ENCODE measurements at regions of chr1 and their contacts with region 1.

Region 1: GRCh38 chr1:172398970-172399755 is 21.3 kb upstream of the C1orf105 start:
- DNase-seq: peak; percentile 100
- ATAC-seq: peak; percentile 91
- H3K4me3 ChIP-seq: peak overlapping the region; percentile 1; the same call in 1 of the 2 replicates
- H3K27ac ChIP-seq: peak overlapping the region; percentile 59
- H3K4me1 ChIP-seq: peaks cover 49% of the 10 kb centered on the region
- H3K27me3 ChIP-seq: no peaks in the 10 kb centered on the region
- CTCF ChIP-seq: peak; percentile 99

Region 2: DNA sequence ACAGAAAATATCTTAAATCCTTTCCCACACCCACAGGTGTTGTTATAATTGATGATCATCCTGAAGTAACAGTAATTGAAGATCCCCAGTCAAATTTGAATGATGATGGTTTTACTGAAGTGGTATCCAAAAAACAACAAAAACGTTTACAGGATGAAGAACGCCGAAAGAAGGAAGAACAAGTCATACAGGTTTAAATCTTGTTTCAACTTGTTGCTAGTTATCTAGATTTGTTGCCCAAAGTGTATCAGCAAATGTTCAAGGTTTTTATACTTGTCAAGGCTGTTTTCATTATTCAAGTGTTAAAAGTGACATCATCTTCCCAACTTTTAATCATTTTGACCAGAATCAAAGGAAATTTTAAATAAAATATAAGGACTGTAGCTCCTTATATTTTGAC is 849.1 kb before region 1 on chr1:
- CTCF ChIA-PET with region 1: no interaction called
- POLR2A ChIA-PET with region 1: no interaction called
- intact Hi-C with region 1: loop called (anchors 10 kb)
- DNase-seq: no peak
- ATAC-seq: no peak
- H3K4me3 ChIP-seq: no peak overlapping the region
- H3K27ac ChIP-seq: no peak overlapping the region
- H3K4me1 ChIP-seq: no peaks in the 10 kb centered on the region
- H3K27me3 ChIP-seq: no peaks in the 10 kb centered on the region
- CTCF ChIP-seq: no peak

Region 3: GRCh38 chr1:172041742-172042141 is 357.4 kb before region 1 on chr1:
- CTCF ChIA-PET with region 1: interaction called, 8 read pairs
- POLR2A ChIA-PET with region 1: interaction called, 17 read pairs
- intact Hi-C with region 1: loop called (anchors 1 kb)
- DNase-seq: peak; percentile 72
- ATAC-seq: peak; percentile 48
- H3K4me3 ChIP-seq: no peak overlapping the region
- H3K27ac ChIP-seq: no peak overlapping the region
- H3K4me1 ChIP-seq: peaks cover 19% of the 10 kb centered on the region
- H3K27me3 ChIP-seq: no peaks in the 10 kb centered on the region
- CTCF ChIP-seq: peak; percentile 80

Region 4: DNA sequence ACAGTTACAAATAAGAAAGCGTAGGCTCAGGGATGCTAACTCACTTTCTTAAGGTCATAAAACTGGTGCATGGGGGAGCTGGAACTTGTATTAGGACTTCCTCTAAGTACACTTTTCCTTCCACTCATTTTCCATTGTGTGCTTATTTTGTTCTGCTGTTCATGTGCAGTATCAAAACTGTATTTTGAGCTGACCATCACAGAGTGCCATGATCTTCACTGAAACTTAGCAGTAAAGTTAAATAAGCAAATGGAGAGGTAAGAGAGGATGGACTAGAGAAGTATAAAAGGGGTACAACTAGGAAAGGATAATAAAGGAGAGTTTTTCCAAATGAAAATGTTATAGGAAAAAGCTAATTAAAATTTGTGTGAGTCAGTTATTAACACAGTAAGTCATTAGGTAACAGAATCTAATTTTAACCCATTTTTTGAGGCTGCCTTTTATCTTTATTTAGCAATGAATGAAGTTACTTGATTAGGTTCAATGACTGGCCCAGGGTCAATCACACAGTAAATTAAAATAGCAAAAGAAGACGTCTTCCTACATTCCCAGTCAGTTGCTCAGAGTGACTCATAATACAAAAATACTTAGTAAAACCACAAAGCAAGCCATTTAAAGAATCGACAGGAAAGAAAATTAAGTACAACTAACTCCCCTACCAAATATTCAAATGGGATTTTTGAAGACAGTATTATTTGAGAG is 144.5 kb before region 1 on chr1:
- CTCF ChIA-PET with region 1: no interaction called
- POLR2A ChIA-PET with region 1: no interaction called
- intact Hi-C with region 1: loop called (anchors 1 kb)
- DNase-seq: peak; percentile 98
- ATAC-seq: peak; percentile 96
- H3K4me3 ChIP-seq: peak overlapping the region; percentile 0; the same call in 1 of the 2 replicates
- H3K27ac ChIP-seq: peak overlapping the region; percentile 53
- H3K4me1 ChIP-seq: peaks cover 23% of the 10 kb centered on the region
- H3K27me3 ChIP-seq: no peaks in the 10 kb centered on the region
- CTCF ChIP-seq: no peak

Region 5: GRCh38 chr1:172343240-172344160 is 55.7 kb before region 1 on chr1:
- CTCF ChIA-PET with region 1: no interaction called
- POLR2A ChIA-PET with region 1: no interaction called
- intact Hi-C with region 1: loop called (anchors 5 kb)
- DNase-seq: peak; percentile 85
- ATAC-seq: peak; percentile 93
- H3K4me3 ChIP-seq: peak overlapping the region; percentile 48
- H3K27ac ChIP-seq: peak overlapping the region; percentile 70
- H3K4me1 ChIP-seq: peaks cover 24% of the 10 kb centered on the region
- H3K27me3 ChIP-seq: no peaks in the 10 kb centered on the region
- CTCF ChIP-seq: no peak